Activated naive CD8-positive, alpha-beta T cell treated with anti-CD3 and anti-CD28 coated beads, Interleukin-2, amount 10 ng/mL, durations not matched to agents 7 days and 5 days (primary cell): ENCODE measurements at regions of chr1 and their contacts with region 1.

Region 1: GRCh38 chr1:145858894-145859490 is at the start of gene PIAS3:
- DNase-seq: peak; percentile 91
- ATAC-seq: peak; percentile 81
- H3K4me3 Mint-ChIP-seq: peak within 1 kb of the TSS; percentile 97
- H3K27ac Mint-ChIP-seq: peak within 1 kb of the TSS; percentile 81
- H3K4me1 Mint-ChIP-seq: peaks cover 9% of the 10 kb centered on the region
- H3K27me3 Mint-ChIP-seq: peaks cover 5% of the 10 kb centered on the region
- total RNA-seq, gene PIAS3: 31.8 to 33.3 TPM

Region 2: DNA sequence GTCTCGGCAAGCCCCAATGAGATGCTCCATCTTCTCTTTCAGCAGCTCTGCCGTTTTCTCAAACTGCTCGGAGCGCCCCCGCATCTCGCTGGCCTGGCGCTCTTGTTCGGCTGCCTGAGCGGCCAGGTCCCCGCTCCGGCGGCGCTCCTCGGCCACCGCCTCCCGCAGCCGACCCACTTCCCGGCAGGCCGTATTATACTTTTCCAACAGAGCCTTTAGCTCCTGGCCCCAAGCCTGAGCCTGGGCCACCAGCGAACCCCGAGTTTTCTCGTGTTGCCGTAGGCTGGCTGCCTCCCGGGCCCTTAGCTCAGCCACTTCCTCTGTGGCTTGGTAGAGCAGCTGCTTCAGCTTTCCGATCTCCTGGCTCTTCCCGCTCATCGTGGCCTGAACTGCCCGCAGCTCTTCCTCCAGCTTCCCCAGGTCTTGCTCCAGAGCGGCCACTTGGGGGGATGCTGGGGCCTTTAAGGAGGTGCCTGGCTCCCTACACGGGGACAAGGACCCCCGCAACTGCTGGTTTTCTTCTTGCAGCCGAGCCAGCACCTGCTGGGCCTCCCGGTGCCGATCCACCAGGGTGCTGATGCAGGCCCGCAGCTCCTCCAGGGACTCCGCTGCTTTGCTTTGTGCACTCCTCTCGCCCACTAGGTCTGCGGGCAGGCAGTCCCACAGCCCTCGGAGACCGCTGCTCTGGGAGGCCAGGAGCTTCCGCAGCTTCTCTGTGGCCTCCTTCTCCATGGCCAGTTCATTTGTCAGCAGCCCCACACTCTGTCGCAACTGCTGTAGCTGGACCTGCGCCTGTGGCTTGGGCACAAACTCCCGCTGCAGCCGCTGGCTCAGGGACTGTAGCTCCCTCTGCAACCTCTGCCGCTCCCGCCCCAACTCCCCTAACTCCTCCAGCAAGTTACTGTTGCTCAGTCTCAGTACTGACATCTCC is 13.3 kb after region 1 on chr1:
- POLR2A ChIA-PET with region 1: interaction called, 35 read pairs
- DNase-seq: peak; percentile 69
- ATAC-seq: peak; percentile 91
- H3K4me3 Mint-ChIP-seq: peak overlapping the region; percentile 83
- H3K27ac Mint-ChIP-seq: peak overlapping the region; percentile 84
- H3K4me1 Mint-ChIP-seq: peaks cover 14% of the 10 kb centered on the region
- H3K27me3 Mint-ChIP-seq: peaks cover 34% of the 10 kb centered on the region

Region 3: GRCh38 chr1:145918144-145918992 is 59.4 kb after region 1 on chr1 and contains the start of gene PEX11B:
- POLR2A ChIA-PET with region 1: interaction called, 25 read pairs
- DNase-seq: peak; percentile 93
- ATAC-seq: peak; percentile 88
- H3K4me3 Mint-ChIP-seq: peak within 1 kb of the TSS; percentile 96
- H3K27ac Mint-ChIP-seq: peak within 1 kb of the TSS; percentile 98
- H3K4me1 Mint-ChIP-seq: peaks cover 34% of the 10 kb centered on the region
- H3K27me3 Mint-ChIP-seq: no peaks in the 10 kb centered on the region
- total RNA-seq, gene PEX11B: 31.0 to 35.8 TPM

Region 4: GRCh38 chr1:145963995-145964901 is 105.3 kb after region 1 on chr1 and contains the starts of genes ANKRD34A and POLR3GL:
- POLR2A ChIA-PET with region 1: interaction called, 23 read pairs
- DNase-seq: peak; percentile 85
- ATAC-seq: peak; percentile 89
- H3K4me3 Mint-ChIP-seq: peak within 1 kb of the TSS; percentile 94
- H3K27ac Mint-ChIP-seq: peak within 1 kb of the TSS; percentile 94
- H3K4me1 Mint-ChIP-seq: peaks cover 39% of the 10 kb centered on the region
- H3K27me3 Mint-ChIP-seq: no peaks in the 10 kb centered on the region
- total RNA-seq, gene ANKRD34A: 2.2 to 2.8 TPM
- total RNA-seq, gene POLR3GL: 32.6 to 34.9 TPM